B cell (primary cell): ENCODE measurements at regions of chr22 and their contacts with region 1.

Region 1: GRCh38 chr22:50498322-50498890 is 9.1 kb downstream of the LMF2 start:
- DNase-seq: peak; percentile 80
- ATAC-seq: peak; percentile 94
- H3K4me3 ChIP-seq: no peak overlapping the region
- H3K4me3 Mint-ChIP-seq: no peak overlapping the region
- H3K27ac ChIP-seq: no peak overlapping the region
- H3K27ac Mint-ChIP-seq: no peak overlapping the region
- H3K4me1 ChIP-seq: peaks cover 3 to 10% of the 10 kb centered on the region in 2 donors
- H3K4me1 Mint-ChIP-seq: peaks cover 4% of the 10 kb centered on the region
- H3K27me3 ChIP-seq: no peaks in the 10 kb centered on the region
- H3K27me3 Mint-ChIP-seq: no peaks in the 10 kb centered on the region
- CTCF ChIP-seq: peak; percentile 73

Region 2: DNA sequence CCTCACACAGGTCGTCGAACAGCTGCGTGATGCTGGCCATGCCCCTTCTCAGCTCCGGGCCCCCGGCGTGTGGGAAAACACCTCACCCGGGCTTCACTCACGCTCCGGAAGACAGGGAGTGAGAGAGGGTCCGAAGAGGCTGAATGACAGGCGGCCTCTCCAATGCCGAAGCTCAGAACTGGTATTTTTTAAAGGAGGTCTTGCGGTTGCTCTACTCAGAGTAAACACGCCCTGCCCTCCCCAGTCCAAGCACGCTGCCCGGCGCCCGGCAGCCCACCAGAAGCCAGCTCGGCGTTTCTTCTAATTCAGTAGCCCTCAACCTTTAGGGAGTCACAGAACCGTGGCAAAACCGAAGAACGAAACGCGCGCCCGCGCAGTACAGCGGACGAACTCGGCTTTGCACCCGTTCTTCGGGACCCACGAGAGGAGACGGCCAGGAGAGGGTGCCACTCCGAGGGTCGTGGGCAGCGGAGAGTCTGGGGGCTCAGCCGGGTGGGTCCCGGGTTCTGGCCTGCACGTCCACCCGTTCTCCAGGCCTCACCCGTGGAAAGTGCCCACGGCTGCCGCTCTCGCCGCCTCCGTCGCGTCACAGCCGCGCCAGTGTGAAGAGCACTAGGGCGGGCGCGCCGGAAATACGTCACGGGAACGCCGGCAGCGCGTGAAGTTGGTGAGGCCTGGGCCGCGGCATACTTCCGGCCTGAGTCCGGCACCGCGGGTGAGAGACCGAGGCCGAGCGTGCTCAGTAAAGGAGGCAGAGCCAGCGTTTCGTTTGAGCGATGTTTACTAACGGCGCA is 253.8 kb before region 1 on chr22 and contains the start of gene TUBGCP6:
- CTCF ChIA-PET with region 1: interaction called, 21 read pairs
- POLR2A ChIA-PET with region 1: interaction called, 11 read pairs
- intact Hi-C with region 1: loop called (anchors 1 kb)
- DNase-seq: peak; percentile 96
- ATAC-seq: peak; percentile 81
- H3K4me3 ChIP-seq: peak within 1 kb of the TSS; percentile 65 to 99 (median 90)
- H3K4me3 Mint-ChIP-seq: peak within 1 kb of the TSS; percentile 96
- H3K27ac ChIP-seq: peak within 1 kb of the TSS; percentile 91 to 96
- H3K27ac Mint-ChIP-seq: peak within 1 kb of the TSS; percentile 99
- H3K4me1 ChIP-seq: peaks cover 33 to 66% of the 10 kb centered on the region in 2 donors
- H3K4me1 Mint-ChIP-seq: peaks cover 40% of the 10 kb centered on the region
- H3K27me3 ChIP-seq: no peaks in the 10 kb centered on the region
- H3K27me3 Mint-ChIP-seq: no peaks in the 10 kb centered on the region
- CTCF ChIP-seq: no peak
- total RNA-seq, gene TUBGCP6: 137 and 139 TPM in 2 replicates

Region 3: GRCh38 chr22:50399751-50400331 is 98.6 kb before region 1 on chr22:
- CTCF ChIA-PET with region 1: interaction called, 42 read pairs
- POLR2A ChIA-PET with region 1: interaction called, 3 read pairs
- intact Hi-C with region 1: loop called (anchors 2 kb)
- DNase-seq: peak; percentile 44
- ATAC-seq: peak; percentile 65
- H3K4me3 ChIP-seq: no peak overlapping the region
- H3K4me3 Mint-ChIP-seq: peak overlapping the region; percentile 66
- H3K27ac ChIP-seq: peak overlapping the region; percentile 45 to 47
- H3K27ac Mint-ChIP-seq: peak overlapping the region; percentile 88
- H3K4me1 ChIP-seq: peaks cover 30 to 44% of the 10 kb centered on the region in 2 donors
- H3K4me1 Mint-ChIP-seq: peaks cover 44% of the 10 kb centered on the region
- H3K27me3 ChIP-seq: no peaks in the 10 kb centered on the region
- H3K27me3 Mint-ChIP-seq: no peaks in the 10 kb centered on the region
- CTCF ChIP-seq: no peak

Region 4: DNA sequence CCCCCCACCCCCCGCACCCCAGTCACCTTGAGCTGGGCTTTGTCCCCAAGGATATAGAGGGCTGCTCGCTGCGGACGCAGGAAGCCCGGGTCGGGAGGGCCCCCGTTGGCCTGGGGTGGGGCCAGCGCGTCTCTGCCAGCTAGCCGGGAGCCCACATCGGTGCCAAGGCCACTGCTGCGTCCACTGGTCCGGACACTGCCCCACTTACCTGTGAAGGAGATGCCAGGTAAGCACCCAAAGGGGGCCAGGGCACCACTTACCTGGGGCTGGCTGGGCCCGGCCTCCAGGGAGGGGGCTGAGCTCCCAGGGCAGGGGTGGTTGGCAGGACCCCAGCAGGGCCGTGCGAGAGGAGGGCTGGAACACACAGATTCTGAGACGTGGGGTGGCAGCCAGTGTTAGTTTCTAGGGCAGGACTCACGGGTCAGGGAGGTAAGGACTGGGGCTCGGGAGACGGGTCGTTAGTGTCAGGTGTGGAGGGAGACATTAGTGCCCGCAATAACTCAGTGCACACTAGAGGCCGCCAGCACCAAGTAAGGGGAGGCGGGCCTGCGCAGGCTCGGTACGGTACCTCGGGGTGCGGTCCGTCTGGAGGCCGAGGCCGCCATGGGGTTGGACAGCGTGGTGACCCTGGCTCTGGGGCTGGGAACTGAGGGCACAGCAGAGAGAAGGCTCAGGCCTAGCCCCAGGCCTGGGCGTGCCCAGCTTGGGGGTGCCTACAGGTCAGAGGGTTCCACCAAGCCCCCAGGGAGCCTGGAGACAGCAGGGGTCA is 41.8 kb before region 1 on chr22:
- CTCF ChIA-PET with region 1: interaction called, 40 read pairs
- POLR2A ChIA-PET with region 1: interaction called, 4 read pairs
- intact Hi-C with region 1: loop called (anchors 1 kb)
- DNase-seq: no peak
- ATAC-seq: no peak
- H3K4me3 ChIP-seq: no peak overlapping the region
- H3K4me3 Mint-ChIP-seq: no peak overlapping the region
- H3K27ac ChIP-seq: no peak overlapping the region
- H3K27ac Mint-ChIP-seq: peak overlapping the region; percentile 59
- H3K4me1 ChIP-seq: no peaks in the 10 kb centered on the region
- H3K4me1 Mint-ChIP-seq: no peaks in the 10 kb centered on the region
- H3K27me3 ChIP-seq: no peaks in the 10 kb centered on the region
- H3K27me3 Mint-ChIP-seq: no peaks in the 10 kb centered on the region
- CTCF ChIP-seq: peak; percentile 35

Region 5: DNA sequence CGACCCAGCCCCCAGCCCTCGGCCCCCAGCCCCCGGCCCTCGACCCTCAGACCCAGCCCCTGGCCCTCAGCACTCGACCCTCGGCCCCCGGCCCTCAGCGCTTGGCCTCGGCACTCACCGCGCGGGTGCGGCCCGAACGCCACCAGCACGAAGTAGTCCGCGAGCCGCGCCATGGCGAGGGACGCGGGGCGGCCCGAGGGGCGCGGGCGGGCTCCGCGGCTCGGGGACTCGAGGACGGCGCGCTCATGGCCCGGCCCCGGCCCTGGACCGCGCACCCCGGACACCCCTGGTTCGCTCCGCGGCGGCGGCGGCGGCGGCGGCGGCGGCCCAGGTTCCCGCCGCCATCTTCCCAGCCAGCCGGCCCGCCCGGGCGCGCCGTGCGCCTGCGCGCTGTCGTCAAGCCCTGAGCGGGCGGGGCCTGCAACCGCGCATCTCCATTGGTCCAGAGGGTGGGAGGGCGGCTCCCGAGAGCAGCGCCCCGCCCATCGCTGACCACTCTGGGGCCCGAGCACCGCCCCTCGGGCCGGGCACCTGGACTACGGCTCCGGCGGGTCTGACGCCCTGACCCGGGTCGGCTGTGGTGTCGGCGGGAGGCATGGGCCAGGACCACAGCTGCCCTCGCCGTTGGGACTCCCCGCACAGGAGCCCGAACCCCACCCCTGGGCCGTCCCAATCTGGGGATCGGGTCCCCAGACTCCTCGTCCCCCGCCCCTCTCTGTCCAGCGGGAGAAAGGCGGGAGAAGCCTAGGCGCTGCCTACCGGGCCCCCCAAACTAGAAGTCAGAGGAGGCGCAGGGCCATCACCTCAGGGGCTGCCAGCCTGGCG is 23.5 kb before region 1 on chr22 and contains the start of gene SBF1:
- CTCF ChIA-PET with region 1: interaction called, 16 read pairs
- POLR2A ChIA-PET with region 1: interaction called, 4 read pairs
- intact Hi-C with region 1: loop called (anchors 1 kb)
- DNase-seq: peak; percentile 93
- ATAC-seq: peak; percentile 78
- H3K4me3 ChIP-seq: peak within 1 kb of the TSS; percentile 51 to 81 (median 68)
- H3K4me3 Mint-ChIP-seq: peak within 1 kb of the TSS; percentile 89
- H3K27ac ChIP-seq: peak within 1 kb of the TSS; percentile 20 to 90
- H3K27ac Mint-ChIP-seq: peak within 1 kb of the TSS; percentile 92
- H3K4me1 ChIP-seq: peaks cover 46 to 51% of the 10 kb centered on the region in 2 donors
- H3K4me1 Mint-ChIP-seq: peaks cover 48% of the 10 kb centered on the region
- H3K27me3 ChIP-seq: no peaks in the 10 kb centered on the region
- H3K27me3 Mint-ChIP-seq: peaks cover 2% of the 10 kb centered on the region
- CTCF ChIP-seq: no peak
- total RNA-seq, gene SBF1: 254 TPM in 2 replicates

Region 6: GRCh38 chr22:50641696-50642607 is 143.5 kb after region 1 on chr22:
- CTCF ChIA-PET with region 1: no interaction called
- POLR2A ChIA-PET with region 1: no interaction called
- intact Hi-C with region 1: no loop called
- DNase-seq: no peak
- ATAC-seq: no peak
- H3K4me3 ChIP-seq: no peak overlapping the region
- H3K4me3 Mint-ChIP-seq: no peak overlapping the region
- H3K27ac ChIP-seq: no peak overlapping the region
- H3K27ac Mint-ChIP-seq: no peak overlapping the region
- H3K4me1 ChIP-seq: no peaks in the 10 kb centered on the region
- H3K4me1 Mint-ChIP-seq: peaks cover 1% of the 10 kb centered on the region
- H3K27me3 ChIP-seq: peaks cover 0 to 43% (median 14%) of the 10 kb centered on the region in 4 experiments
- H3K27me3 Mint-ChIP-seq: peaks cover 25% of the 10 kb centered on the region
- CTCF ChIP-seq: no peak